ENCODE measurements at regions of chr19 and their contacts with region 1.

Region 1: DNA sequence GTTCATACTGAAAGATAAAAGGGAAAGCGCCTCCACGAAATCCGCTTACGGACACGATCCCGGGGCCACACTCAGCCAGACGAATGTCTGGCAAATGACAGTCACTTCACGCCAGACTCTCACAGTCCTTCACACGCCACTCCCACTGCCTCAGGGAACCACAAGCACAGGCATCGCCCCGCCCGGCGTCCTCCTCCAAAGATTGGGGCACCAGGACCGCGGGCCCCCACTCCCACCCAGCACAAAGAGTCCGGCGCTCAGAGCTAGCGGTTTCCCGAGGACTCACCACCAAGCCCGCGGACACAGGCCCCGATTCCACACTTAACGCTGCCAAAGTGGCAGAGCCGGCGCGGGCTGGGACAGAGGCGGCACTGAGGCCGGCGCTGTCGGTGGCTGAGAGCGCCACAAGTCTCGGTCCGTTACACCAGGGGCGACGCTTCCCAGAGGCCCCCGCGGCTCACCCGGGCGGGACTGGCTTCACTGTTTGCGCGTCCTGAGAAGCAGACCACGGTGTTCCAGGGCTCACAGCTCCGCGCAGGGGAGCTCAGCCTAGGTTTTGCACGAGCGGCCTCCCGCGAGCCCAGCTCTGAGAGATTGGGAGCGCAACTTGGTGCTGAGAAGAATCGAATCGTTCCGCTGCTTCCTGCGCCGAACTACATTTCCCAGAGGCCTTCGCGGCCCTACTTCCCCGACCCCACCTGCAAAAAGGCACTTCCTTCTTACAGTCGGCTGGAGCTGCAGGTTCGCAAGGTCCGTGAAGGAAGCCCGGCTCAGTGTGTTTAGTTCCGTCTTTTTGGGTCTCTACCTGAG is at the start of gene ZNF569:
- DNase-seq: peak; percentile 96
- H3K4me3 Mint-ChIP-seq: peak within 1 kb of the TSS; percentile 90
- H3K27ac Mint-ChIP-seq: peak within 1 kb of the TSS; percentile 93
- H3K4me1 Mint-ChIP-seq: peaks cover 19% of the 10 kb centered on the region
- H3K27me3 Mint-ChIP-seq: no peaks in the 10 kb centered on the region
- total RNA-seq, gene ZNF569: 3.4 and 3.5 TPM in 2 replicates

Region 2: DNA sequence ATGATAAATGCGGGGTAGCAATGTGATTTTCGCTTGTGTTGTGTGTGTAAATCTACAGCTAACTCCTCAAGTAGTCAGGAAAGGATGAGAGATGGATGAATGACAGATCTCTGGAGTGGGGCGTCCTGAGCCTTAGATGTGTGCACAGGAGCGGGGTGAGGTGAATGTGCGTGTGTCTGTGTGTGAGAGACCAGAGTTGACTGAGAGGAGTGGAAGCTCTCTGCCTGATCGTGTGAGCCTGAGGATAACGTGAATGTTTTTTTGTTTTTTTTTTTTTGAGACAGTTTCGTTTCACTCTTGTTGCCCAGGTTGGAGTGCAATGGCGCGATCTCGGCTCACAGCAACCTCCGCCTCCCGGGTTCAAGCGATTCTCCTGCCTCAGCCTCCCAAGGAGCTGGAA is 801.2 kb before region 1 on chr19:
- intact Hi-C with region 1: loop called (anchors 5 kb)
- DNase-seq: no peak
- H3K4me3 Mint-ChIP-seq: peak overlapping the region; percentile 98
- H3K27ac Mint-ChIP-seq: peak overlapping the region; percentile 76
- H3K4me1 Mint-ChIP-seq: peaks cover 23% of the 10 kb centered on the region
- H3K27me3 Mint-ChIP-seq: no peaks in the 10 kb centered on the region

Region 3: DNA sequence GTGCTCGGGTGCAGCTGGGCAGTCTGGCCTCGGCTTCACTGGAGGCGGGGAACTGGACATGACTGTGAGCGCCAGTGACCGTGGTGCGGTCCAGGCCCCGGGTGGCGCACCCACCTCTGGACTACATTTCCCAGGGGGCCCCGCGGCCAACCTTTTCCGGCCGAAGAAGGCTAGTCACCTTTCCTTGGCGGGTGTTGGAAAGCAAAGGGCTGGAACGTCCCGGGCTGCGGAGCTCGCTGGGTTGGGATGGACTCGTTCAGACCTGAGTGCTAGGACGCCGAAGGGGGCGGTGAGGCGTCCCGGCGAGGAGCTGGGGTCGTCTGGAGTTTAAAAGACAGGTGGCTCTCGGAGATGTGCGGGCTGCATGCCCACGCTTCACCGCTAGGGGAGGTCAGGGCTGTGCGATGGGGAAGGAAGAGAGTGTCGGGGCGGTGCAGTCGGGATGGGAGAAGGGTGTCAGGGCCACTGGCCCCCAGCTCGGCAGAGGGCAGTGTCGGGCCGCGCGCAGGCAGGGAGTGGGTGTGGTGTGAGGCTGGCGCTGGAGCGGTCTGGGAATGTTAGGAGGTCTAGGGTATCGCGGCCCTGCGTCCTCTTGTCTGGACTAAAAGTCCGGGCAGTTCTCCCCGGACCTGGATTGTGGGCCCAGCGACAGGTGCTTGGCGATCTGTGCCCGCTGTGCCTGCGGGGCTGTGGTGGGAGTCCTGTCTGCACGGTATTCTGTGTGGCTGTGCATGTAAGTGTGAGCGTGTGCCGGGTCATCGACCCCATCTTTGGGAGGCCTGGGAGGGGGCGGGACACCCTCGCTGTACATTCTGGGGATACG is 493.8 kb before region 1 on chr19:
- intact Hi-C with region 1: loop called (anchors 5 kb)
- DNase-seq: peak; percentile 92
- H3K4me3 Mint-ChIP-seq: peak overlapping the region; percentile 99
- H3K27ac Mint-ChIP-seq: peak overlapping the region; percentile 92
- H3K4me1 Mint-ChIP-seq: peaks cover 12% of the 10 kb centered on the region
- H3K27me3 Mint-ChIP-seq: no peaks in the 10 kb centered on the region

Region 4: DNA sequence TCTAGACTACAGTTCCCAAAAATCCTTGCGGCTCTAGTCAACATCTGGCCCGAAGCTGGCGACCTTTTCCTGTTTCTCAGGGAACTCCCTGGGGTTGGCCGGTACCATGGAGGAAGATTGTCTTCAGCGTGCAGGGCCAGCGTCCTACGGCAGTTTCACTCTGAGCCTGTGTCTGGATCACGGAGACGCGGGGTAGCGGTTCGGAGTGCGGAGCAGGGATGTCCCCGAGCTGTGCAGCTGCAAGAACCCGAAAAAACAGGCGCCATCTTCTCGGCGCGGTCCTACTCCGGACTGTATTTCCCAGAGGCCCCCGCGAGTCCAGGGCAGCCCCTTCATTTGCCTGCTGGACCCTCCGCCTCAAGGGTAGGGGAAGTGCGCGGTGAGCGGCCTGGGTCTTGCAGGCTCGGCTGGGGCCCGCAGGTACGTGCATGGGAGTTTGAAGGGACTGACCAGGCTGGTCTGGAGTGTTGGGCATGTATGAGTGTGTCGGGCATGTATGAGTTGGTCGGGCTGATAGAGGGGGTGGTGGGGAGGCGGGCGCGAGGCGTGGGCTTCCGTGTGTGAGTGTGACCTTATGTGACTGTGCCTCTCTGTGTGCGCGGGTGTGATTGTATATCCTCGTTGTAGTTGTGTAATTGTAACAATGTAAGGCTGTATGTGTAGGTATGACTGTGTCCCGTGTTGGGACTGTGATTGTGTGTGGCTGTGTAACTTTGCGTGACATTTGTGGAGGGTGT is 249.0 kb before region 1 on chr19 and contains the start of gene ZNF383:
- intact Hi-C with region 1: loop called (anchors 2 kb)
- DNase-seq: peak; percentile 95
- H3K4me3 Mint-ChIP-seq: peak within 1 kb of the TSS; percentile 97
- H3K27ac Mint-ChIP-seq: peak within 1 kb of the TSS; percentile 94
- H3K4me1 Mint-ChIP-seq: peaks cover 16% of the 10 kb centered on the region
- H3K27me3 Mint-ChIP-seq: no peaks in the 10 kb centered on the region
- total RNA-seq, gene ZNF383: 6.4 and 8.6 TPM in 2 replicates

Region 5: DNA sequence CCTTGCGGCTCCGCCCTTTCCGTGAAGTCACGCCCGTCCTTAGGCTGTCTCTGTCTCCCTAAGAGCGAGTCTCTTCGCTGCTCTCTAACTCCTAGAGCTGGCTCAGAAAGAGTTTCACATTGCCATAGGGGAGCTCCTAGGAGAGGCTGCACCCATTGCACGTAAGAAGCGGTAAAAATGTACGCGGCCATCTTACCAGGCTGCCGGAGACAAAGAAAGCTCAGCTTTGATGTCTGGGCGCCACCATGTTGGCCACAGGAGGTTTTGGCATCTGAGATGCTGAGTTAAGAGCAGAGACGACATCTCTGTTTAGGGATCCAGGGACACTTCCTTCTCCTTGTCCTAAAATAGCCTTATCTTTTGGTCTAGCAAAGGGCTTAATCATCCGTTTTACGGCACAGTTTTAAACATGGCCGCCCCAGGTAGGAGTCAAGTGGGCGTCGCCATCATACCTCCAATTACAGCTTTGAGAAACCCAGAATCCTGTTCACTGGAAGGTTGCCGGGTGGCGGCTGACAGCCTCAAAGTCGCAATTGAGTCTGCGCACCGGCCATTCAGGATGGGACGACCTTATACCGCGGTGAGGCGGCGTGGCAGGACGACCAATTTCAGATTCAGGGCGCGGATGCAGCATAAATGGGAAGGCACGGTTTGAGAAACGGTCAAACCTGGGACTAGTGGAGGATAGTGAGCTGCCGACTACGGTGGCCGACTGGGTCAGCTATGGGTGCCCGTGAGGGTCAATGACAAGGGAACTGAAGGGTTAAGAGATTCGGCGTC is 39.6 kb after region 1 on chr19 and contains the start of gene ZNF793:
- intact Hi-C with region 1: loop called (anchors 2 kb)
- DNase-seq: peak; percentile 80
- H3K4me3 Mint-ChIP-seq: no peak within 1 kb of the TSS
- H3K27ac Mint-ChIP-seq: no peak within 1 kb of the TSS
- H3K4me1 Mint-ChIP-seq: no peaks in the 10 kb centered on the region
- H3K27me3 Mint-ChIP-seq: no peaks in the 10 kb centered on the region
- total RNA-seq, gene ZNF793: 0.69 and 0.72 TPM in 2 replicates

Region 6: DNA sequence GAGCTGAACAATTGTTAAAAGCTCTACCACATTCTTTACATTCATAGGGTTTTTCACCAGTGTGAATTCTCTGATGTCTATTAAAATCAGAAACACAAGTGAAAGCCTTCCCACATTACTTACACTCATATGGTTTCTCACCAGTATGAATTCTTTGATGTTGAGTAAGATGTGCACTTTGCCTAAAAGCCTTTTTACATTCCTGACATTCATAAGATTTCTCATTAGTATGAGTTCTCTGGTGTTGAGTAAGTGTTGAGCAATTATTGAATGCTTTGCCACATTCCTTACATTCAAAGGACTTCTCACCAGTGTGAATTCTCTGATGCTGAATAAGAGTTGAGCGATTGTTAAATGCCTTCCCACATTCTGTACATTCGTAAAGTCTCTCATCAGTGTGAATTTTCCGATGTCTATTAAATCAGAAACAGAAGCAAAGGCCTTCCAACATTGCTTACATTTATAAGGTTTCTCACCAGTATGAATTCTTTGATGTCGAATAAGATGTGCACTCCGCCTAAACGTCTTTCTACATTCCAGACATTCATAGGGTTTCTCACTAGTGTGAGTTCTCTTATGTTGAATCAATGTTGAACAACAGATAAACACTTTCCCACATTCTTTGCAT is 202.4 kb after region 1 on chr19:
- intact Hi-C with region 1: no loop called
- DNase-seq: no peak
- H3K4me3 Mint-ChIP-seq: no peak overlapping the region
- H3K27ac Mint-ChIP-seq: no peak overlapping the region
- H3K4me1 Mint-ChIP-seq: no peaks in the 10 kb centered on the region
- H3K27me3 Mint-ChIP-seq: no peaks in the 10 kb centered on the region

Region 7: GRCh38 chr19:37719111-37719926 is 252.3 kb after region 1 on chr19 and contains the start of gene ZNF607:
- intact Hi-C with region 1: loop called (anchors 1 kb)
- DNase-seq: peak; percentile 92
- H3K4me3 Mint-ChIP-seq: peak within 1 kb of the TSS; percentile 83
- H3K27ac Mint-ChIP-seq: peak within 1 kb of the TSS; percentile 84
- H3K4me1 Mint-ChIP-seq: peaks cover 7% of the 10 kb centered on the region
- H3K27me3 Mint-ChIP-seq: no peaks in the 10 kb centered on the region
- total RNA-seq, gene ZNF607: 2.8 and 3.4 TPM in 2 replicates

Measured in activated CD4-positive, alpha-beta T cell treated with anti-CD3 and anti-CD28 coated beads, Interleukin-2, amount 10 ng/mL, durations not matched to agents 24 days and 14 days (primary cell).